CD4-positive, alpha-beta T cell (primary cell): ENCODE measurements at regions of chr22 and their contacts with region 1.

Region 1: DNA sequence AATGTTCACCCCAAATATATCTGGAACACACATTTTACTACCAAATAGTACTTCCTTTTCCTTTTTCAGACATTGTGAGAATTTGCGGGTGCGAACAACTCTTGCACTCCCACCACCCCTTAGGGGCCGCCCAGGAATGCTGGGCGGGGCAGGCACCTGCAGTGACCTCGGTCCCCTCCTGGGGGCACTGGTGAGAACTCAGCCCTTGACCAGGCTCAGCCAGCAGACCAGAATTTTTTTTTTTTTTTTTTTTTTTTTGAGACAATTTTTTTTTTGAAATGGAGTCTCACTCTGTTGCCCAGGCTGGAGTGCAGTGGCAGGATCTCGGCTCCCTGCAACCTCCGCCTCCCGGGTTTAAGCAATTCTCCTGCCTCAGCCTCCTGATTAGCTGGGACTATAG is 75.8 kb downstream of the ARHGAP8 start:
- DNase-seq: no peak
- ATAC-seq: no peak
- H3K4me3 ChIP-seq: no peak overlapping the region
- H3K4me3 Mint-ChIP-seq: no peak overlapping the region
- H3K27ac ChIP-seq: no peak overlapping the region
- H3K27ac Mint-ChIP-seq: no peak overlapping the region
- H3K4me1 ChIP-seq: no peaks in the 10 kb centered on the region
- H3K4me1 Mint-ChIP-seq: no peaks in the 10 kb centered on the region
- H3K27me3 ChIP-seq: no peaks in the 10 kb centered on the region
- H3K27me3 Mint-ChIP-seq: peaks cover 10% of the 10 kb centered on the region
- CTCF ChIP-seq: no peak

Region 2: GRCh38 chr22:44807915-44808690 is 20.1 kb before region 1 on chr22:
- CTCF ChIA-PET with region 1: no interaction called
- POLR2A ChIA-PET with region 1: no interaction called
- intact Hi-C with region 1: no loop called
- DNase-seq: no peak
- ATAC-seq: no peak
- H3K4me3 ChIP-seq: no peak overlapping the region
- H3K4me3 Mint-ChIP-seq: no peak overlapping the region
- H3K27ac ChIP-seq: no peak overlapping the region
- H3K27ac Mint-ChIP-seq: no peak overlapping the region
- H3K4me1 ChIP-seq: peaks cover 3% of the 10 kb centered on the region
- H3K4me1 Mint-ChIP-seq: no peaks in the 10 kb centered on the region
- H3K27me3 ChIP-seq: no peaks in the 10 kb centered on the region
- H3K27me3 Mint-ChIP-seq: peaks cover 14% of the 10 kb centered on the region
- CTCF ChIP-seq: no peak

Region 3: GRCh38 chr22:45096256-45096907 is 268.2 kb after region 1 on chr22:
- CTCF ChIA-PET with region 1: no interaction called
- POLR2A ChIA-PET with region 1: no interaction called
- intact Hi-C with region 1: loop called in 1 of 2 experiments (anchors 10 kb)
- DNase-seq: peak in 13 of 14 experiments; percentile 8 to 59 (median 20)
- ATAC-seq: peak; percentile 44
- H3K4me3 ChIP-seq: no peak overlapping the region
- H3K4me3 Mint-ChIP-seq: no peak overlapping the region
- H3K27ac ChIP-seq: no peak overlapping the region
- H3K27ac Mint-ChIP-seq: no peak overlapping the region
- H3K4me1 ChIP-seq: no peaks in the 10 kb centered on the region
- H3K4me1 Mint-ChIP-seq: no peaks in the 10 kb centered on the region
- H3K27me3 ChIP-seq: peaks cover 0 to 5% of the 10 kb centered on the region in 2 experiments
- H3K27me3 Mint-ChIP-seq: peaks cover 47% of the 10 kb centered on the region
- CTCF ChIP-seq: peak; percentile 59